ENCODE measurements at regions of chr17 and their contacts with region 1.

Region 1: DNA sequence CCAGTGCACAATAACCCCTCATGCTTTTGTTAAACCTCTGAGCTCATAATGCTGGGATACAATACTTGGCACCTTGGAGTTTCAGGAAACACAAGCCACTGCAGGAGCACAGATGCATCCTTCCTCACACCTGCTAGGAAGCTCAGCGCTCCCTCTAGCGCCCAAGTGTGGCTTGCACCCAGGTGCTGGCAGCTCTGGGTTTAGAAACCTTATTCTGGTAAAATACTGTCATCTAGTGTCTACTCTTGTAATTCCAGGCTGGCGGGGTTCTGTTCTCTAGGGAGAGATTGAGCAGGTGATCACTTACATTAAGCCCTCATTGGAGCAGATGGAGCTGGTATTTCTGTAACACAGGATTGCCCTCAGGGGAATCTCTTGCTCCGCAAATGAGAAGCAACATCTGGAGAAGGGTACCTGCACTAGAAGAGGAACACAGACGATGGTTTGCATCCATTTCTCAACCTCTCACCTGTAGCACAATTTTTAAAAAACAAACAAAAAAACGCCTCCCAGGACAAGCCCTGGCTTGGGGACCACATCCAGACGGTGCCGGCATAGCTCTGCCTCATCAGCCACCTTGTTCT is 1.5 kb downstream of the CCL1 start:
- DNase-seq: peak; percentile 7 to 76 (median 42)
- ATAC-seq: peak; percentile 71
- H3K4me3 ChIP-seq: no peak overlapping the region
- H3K4me3 Mint-ChIP-seq: no peak overlapping the region
- H3K27ac ChIP-seq: no peak overlapping the region
- H3K27ac Mint-ChIP-seq: no peak overlapping the region
- H3K4me1 ChIP-seq: no peaks in the 10 kb centered on the region
- H3K4me1 Mint-ChIP-seq: peaks cover 9% of the 10 kb centered on the region
- H3K27me3 ChIP-seq: no peaks in the 10 kb centered on the region
- H3K27me3 Mint-ChIP-seq: peaks cover 5% of the 10 kb centered on the region
- CTCF ChIP-seq: peak; percentile 66

Region 2: DNA sequence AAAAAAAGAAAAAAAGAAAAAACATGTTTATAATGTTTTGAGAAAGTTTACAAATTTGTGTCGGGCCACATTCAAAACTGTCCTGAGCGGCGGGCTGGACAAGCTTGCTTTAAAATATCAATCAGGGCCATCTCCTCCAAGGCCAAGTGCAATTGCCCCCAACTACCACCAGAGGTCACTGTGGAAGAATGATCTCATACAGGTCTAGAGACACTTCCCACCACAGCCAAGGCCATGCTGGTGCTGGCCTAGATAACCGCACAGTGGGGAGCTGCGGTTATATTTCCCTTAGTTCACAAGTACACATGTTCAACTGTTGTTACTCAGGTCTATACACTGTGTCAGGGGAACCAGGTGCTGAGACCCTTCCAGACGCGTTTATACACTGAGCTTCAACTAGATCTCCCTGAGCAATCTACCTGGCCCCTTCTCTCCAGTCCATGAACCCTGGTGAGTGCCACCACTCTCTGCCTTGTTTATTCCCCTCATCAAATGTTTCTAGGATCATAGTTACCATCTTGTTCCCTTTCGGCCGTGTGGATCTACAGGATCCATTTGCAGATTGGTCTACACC is 190.2 kb before region 1 on chr17:
- CTCF ChIA-PET with region 1: no interaction called
- POLR2A ChIA-PET with region 1: no interaction called
- intact Hi-C with region 1: loop called in 1 of 2 experiments (anchors 1 kb)
- DNase-seq: peak; percentile 7 to 65 (median 30)
- ATAC-seq: peak; percentile 64
- H3K4me3 ChIP-seq: no peak overlapping the region
- H3K4me3 Mint-ChIP-seq: no peak overlapping the region
- H3K27ac ChIP-seq: no peak overlapping the region
- H3K27ac Mint-ChIP-seq: no peak overlapping the region
- H3K4me1 ChIP-seq: no peaks in the 10 kb centered on the region
- H3K4me1 Mint-ChIP-seq: no peaks in the 10 kb centered on the region
- H3K27me3 ChIP-seq: no peaks in the 10 kb centered on the region
- H3K27me3 Mint-ChIP-seq: peaks cover 8% of the 10 kb centered on the region
- CTCF ChIP-seq: peak; percentile 91

Region 3: GRCh38 chr17:34199932-34200534 is 161.5 kb before region 1 on chr17:
- CTCF ChIA-PET with region 1: interaction called, 5 read pairs
- POLR2A ChIA-PET with region 1: interaction called, 3 read pairs
- intact Hi-C with region 1: loop called (anchors 1 kb)
- DNase-seq: peak; percentile 37 to 85 (median 56)
- ATAC-seq: peak; percentile 94
- H3K4me3 ChIP-seq: no peak overlapping the region
- H3K4me3 Mint-ChIP-seq: no peak overlapping the region
- H3K27ac ChIP-seq: no peak overlapping the region
- H3K27ac Mint-ChIP-seq: no peak overlapping the region
- H3K4me1 ChIP-seq: no peaks in the 10 kb centered on the region
- H3K4me1 Mint-ChIP-seq: peaks cover 6% of the 10 kb centered on the region
- H3K27me3 ChIP-seq: peaks cover 0 to 23% of the 10 kb centered on the region in 2 experiments
- H3K27me3 Mint-ChIP-seq: peaks cover 15% of the 10 kb centered on the region
- CTCF ChIP-seq: peak; percentile 100

Region 4: GRCh38 chr17:34451313-34451712 is 89.7 kb after region 1 on chr17:
- CTCF ChIA-PET with region 1: no interaction called
- POLR2A ChIA-PET with region 1: no interaction called
- intact Hi-C with region 1: no loop called
- DNase-seq: no peak
- ATAC-seq: no peak
- H3K4me3 ChIP-seq: no peak overlapping the region
- H3K4me3 Mint-ChIP-seq: no peak overlapping the region
- H3K27ac ChIP-seq: no peak overlapping the region
- H3K27ac Mint-ChIP-seq: no peak overlapping the region
- H3K4me1 ChIP-seq: no peaks in the 10 kb centered on the region
- H3K4me1 Mint-ChIP-seq: no peaks in the 10 kb centered on the region
- H3K27me3 ChIP-seq: peaks cover 6 to 15% of the 10 kb centered on the region in 2 experiments
- H3K27me3 Mint-ChIP-seq: peaks cover 51% of the 10 kb centered on the region
- CTCF ChIP-seq: no peak